AG04449 (cell line): ENCODE measurements at regions of chr1 and their contacts with region 1.

Region 1: DNA sequence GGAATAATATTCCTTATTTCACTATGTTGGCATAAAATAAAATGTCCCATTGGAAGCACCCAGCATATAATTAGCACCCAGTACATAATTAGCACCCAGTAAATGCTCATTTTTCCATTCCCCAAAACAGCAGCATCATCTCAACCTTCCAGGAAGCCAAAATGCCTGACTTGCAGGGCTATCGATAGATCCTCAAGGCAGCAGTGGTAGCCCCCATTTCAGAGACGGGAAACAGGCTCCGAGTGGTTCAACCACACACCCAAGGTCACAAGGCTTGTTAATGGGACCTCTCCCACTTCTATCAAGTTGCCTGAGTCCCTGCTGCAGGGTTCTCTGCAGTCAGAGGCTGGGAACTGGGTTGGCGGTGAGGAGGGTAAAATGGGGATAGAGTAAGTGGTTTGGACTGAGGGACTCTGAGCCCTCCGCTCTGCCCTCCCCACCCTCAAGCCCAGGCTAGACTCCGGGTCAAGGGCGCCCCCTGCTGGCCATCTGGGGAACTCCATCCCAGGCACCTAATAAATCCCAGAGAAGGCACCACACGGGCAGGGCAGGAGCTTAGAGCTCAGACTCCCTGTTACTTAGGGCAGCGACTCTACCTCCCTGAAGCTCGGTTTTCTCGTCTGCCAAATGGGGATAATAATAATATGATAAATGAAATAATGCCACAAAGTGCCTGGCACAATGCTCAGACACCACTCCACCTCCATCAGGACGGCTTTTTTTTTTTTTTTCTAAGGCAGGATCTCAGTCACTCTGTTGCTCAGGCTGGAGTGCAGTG is 21.9 kb upstream of the LAPTM5 start:
- DNase-seq: no peak
- H3K4me3 ChIP-seq: no peak overlapping the region
- CTCF ChIP-seq: peak; percentile 93

Region 2: GRCh38 chr1:30732277-30732996 is 47.0 kb before region 1 on chr1:
- CTCF ChIA-PET with region 1: interaction called, 943 read pairs
- POLR2A ChIA-PET with region 1: interaction called, 4 read pairs
- DNase-seq: no peak
- H3K4me3 ChIP-seq: no peak overlapping the region
- CTCF ChIP-seq: no peak

Region 3: DNA sequence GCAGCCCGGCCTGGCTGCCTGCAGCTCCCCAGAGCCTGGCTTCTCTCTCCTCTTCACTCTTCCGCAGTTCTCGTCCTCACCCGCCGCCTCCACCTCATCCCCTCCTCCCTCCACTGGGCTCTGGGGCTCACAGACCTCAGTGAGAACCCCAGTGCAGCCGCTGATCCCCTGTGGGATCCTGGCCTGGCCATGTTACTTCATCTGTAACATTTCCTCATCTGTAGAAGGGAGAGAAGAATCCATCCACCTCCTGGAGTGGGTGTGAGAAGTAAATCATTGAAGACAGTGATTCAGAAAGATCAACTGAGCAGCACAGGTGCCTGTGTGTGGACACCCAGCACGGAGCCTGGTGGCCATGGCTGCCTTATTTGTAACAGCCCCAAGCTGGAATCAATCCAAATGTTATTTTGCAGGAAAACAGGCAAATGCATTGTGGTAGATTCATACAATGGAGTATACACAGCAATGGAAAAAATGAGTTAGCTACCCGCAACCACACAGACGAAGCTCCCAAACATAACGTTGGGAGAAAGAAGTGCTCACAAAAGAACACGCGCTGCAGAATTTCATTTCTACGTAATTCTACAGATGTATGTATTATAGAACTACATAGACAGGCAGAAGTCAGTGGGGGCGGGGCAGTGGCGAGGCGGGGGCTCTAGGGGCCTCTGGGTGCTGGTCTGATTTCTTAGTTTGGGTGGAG is 30.6 kb before region 1 on chr1:
- CTCF ChIA-PET with region 1: interaction called, 83 read pairs
- POLR2A ChIA-PET with region 1: no interaction called
- DNase-seq: no peak
- H3K4me3 ChIP-seq: no peak overlapping the region
- CTCF ChIP-seq: no peak

Region 4: GRCh38 chr1:30763651-30764248 is 15.7 kb before region 1 on chr1:
- CTCF ChIA-PET with region 1: interaction called, 221 read pairs
- POLR2A ChIA-PET with region 1: no interaction called
- DNase-seq: no peak
- H3K4me3 ChIP-seq: no peak overlapping the region
- CTCF ChIP-seq: no peak

Region 5: GRCh38 chr1:30888391-30888790 is 108.9 kb after region 1 on chr1:
- CTCF ChIA-PET with region 1: interaction called, 11 read pairs
- POLR2A ChIA-PET with region 1: no interaction called
- DNase-seq: peak; percentile 98
- H3K4me3 ChIP-seq: no peak overlapping the region; the same call in 1 of the 2 replicates
- CTCF ChIP-seq: no peak

Region 6: DNA sequence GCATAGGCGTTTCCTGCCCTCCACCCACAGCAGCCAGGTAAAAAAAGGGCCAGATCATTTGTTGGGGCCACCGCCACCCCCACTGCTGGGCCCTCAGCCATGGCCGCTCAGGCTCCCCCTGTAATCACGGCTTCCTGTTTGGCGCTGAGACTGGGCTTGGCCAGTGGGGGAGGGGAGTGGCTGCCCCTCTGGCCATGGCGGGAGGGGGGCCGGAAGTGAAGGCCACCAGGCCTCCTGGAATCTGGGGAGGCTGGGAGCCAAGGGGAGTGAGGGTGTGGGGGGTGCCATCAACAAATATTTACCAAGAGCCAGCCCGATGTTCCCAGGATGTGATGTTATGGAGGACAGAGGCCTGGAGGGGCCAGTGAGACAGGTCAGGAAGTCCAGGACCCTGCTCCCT is 122.7 kb after region 1 on chr1:
- CTCF ChIA-PET with region 1: interaction called, 51 read pairs
- POLR2A ChIA-PET with region 1: no interaction called
- DNase-seq: no peak
- H3K4me3 ChIP-seq: no peak overlapping the region
- CTCF ChIP-seq: no peak

Region 7: DNA sequence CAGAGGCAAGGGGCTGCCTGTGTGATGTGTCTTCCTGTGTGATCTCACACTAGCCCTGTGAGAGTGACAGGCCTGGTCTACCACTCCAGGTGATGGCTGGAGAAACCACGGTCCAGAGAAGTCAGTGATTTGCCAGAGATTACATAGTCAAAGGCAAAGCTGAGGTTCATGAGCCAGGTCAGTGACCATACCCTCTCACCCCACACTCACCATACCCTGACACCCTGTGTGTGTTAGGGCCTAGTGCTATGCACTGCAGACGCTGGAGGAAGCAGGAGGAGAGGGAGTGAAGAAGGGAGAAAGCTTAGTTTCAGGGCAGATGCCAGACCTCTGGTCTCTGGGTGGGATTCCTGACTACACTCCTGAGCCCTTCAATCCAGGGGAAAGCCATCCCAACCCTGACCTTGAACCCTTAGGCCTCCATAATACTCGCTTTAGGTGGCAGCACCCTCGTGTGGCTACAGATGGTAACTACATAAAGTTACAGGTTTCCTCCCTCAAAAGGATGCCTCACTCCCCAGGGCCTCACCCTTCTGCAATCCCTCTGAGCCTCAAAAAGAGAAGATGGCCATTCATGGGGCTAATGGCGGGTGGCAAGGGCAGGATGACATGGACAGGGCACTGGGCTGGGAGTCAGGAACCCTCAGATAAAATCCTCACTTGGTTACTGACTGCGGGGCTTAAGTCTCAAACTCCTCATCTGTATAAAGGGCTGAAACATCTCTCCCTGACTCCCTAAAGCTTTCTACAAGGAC is 149.8 kb after region 1 on chr1:
- CTCF ChIA-PET with region 1: interaction called, 283 read pairs
- POLR2A ChIA-PET with region 1: no interaction called
- DNase-seq: no peak
- H3K4me3 ChIP-seq: no peak overlapping the region
- CTCF ChIP-seq: peak; percentile 61

Region 8: DNA sequence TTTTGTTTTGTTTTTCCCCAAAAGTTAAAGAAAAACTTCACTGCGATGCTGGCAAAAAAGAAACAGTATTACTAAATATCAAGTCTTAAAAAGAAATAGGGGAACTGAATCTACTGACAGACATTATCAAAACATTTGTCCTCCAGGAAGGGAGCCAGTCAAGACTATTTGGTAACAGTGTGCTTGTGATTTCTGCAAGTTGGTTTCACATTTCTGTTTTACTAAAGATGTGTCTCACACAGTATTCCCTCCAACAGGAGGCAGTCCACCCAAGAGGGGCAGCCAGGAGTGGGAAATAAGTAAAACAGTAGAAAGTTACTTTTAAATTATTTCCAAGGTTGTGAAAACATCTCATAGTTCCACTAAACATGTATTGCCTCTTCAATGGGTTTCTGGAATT is 203.5 kb after region 1 on chr1:
- CTCF ChIA-PET with region 1: no interaction called
- POLR2A ChIA-PET with region 1: no interaction called
- DNase-seq: no peak
- H3K4me3 ChIP-seq: no peak overlapping the region
- CTCF ChIP-seq: no peak